ENCODE measurements at regions of chr19 and their contacts with region 1.

Region 1: GRCh38 chr19:2328401-2329148 is at the starts of genes LSM7 and SPPL2B:
- DNase-seq: peak; percentile 95
- H3K4me3 ChIP-seq: peak within 1 kb of the TSS; percentile 89
- H3K27ac ChIP-seq: peak within 1 kb of the TSS; percentile 70
- H3K4me1 ChIP-seq: peaks cover 65% of the 10 kb centered on the region
- CTCF ChIP-seq: no peak
- total RNA-seq, gene LSM7: 288 and 321 TPM in 2 replicates
- total RNA-seq, gene SPPL2B: 96.9 and 106 TPM in 2 replicates

Region 2: DNA sequence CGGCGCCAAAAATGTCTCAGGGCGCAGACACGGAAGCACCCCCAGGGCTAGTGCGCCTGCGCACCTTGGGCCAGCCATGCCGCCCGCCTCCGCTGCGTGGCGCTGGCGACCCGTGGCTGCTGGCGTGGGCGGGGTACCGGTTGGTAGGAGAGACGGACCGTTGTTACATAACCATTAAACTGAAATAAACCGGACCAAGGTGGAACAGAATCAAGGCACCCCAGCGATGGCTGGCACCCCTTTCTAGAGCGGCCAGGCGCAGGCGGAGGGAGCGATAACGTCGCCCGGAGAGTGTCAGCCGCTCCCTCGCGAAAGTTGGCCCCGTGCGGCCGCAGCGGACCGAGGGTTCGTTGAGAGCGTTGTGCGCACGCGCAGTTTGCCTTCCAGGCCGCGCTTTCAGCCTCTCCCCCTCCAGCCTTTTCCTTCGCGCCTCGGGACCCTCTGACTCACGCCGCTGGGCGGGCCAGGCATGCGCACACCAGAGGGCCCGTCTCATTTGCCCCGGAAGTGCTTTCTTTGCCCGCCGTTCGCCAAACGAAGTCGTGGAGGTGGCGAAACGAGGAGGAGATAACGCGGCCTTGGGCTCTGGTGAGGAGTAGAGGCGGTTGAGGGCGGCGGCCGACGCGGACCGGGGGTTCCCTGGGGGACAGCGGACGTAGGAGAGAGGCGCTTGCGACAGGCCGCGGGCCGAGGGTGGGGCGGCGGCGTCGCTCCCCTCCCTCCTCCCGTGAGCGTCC is 92.1 kb before region 1 on chr19 and contains the starts of genes PLEKHJ1 and SF3A2:
- CTCF ChIA-PET with region 1: no interaction called
- POLR2A ChIA-PET with region 1: no interaction called
- intact Hi-C with region 1: loop called (anchors 1 kb)
- DNase-seq: peak; percentile 99
- H3K4me3 ChIP-seq: peak within 1 kb of the TSS; percentile 96
- H3K27ac ChIP-seq: peak within 1 kb of the TSS; percentile 75
- H3K4me1 ChIP-seq: peaks cover 68% of the 10 kb centered on the region
- CTCF ChIP-seq: peak; percentile 97
- total RNA-seq, gene PLEKHJ1: 205 and 221 TPM in 2 replicates
- total RNA-seq, gene SF3A2: 104 and 124 TPM in 2 replicates

Region 3: DNA sequence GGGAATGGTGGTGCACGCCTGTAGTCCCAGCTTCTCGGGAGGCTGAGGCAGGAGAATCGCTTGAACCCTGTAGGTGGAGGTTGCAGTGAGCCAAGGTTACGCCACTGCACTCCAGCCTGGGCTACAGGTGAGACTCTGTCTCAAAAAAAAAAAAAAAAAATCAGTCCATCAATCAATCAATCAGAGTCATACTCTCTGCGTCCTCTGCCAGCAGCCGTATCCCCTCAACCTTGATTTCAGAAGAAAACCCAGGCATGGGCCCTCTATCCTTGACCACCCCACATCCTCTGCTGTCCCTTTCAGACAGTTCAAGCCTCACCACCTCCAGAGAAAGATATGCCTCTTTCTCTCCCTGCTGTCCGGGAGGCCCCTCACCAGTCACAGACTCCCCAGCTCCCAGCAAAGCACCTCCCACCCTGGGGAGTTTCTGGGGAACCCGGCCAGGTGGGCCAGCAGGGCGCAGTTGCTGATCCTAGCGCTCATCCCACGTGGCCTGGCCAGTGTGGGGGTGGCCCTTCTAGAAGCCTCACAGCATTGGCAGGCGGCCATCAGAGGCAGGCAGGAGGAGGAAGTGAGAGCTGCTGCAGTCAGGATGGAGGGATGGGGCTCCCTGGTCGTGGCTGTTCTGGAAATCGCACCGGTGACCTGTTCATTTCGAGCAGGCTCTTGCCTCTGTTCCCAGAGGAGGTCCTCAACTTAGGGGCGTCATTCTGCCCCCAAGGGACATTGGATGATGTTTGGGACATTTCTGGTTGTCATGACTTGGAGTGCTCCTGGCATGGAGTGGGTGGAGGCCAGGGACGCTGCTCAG is 62.2 kb before region 1 on chr19:
- CTCF ChIA-PET with region 1: no interaction called
- POLR2A ChIA-PET with region 1: no interaction called
- intact Hi-C with region 1: no loop called
- DNase-seq: peak; percentile 67
- H3K4me3 ChIP-seq: peak overlapping the region; percentile 1
- H3K27ac ChIP-seq: peak overlapping the region; percentile 26
- H3K4me1 ChIP-seq: peaks cover 40% of the 10 kb centered on the region
- CTCF ChIP-seq: no peak

Region 4: DNA sequence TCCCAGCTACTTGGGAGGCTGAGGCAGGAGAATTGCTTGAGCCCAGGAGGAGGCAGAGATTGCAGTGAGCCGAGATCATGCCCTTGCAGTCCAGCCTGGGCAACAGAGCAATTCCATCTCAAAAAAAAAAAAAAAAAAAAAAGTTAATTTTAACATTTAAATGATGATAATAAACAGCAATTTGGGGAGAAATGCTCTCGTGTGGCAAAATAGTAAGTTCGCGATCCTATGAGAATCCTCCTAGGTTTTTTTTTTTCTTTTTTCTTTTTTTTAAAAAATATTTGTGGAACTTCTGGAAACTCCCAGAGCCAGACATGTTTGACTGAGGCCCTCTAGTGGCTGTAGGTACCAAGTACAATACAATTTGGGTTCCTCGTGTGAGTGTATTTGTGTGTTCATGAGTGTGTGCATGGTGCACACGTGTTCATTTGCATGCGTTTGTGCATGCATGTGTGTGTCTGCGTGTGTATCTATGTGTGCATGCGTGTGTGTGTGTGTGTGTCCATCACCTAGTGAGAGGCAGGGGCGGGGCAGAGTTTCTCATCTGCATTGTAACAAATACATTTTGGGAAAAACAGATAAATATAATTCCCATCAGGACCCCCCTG is 62.6 kb after region 1 on chr19:
- CTCF ChIA-PET with region 1: no interaction called
- POLR2A ChIA-PET with region 1: interaction called, 3 read pairs
- intact Hi-C with region 1: loop called (anchors 2 kb)
- DNase-seq: peak; percentile 86
- H3K4me3 ChIP-seq: no peak overlapping the region
- H3K27ac ChIP-seq: no peak overlapping the region
- H3K4me1 ChIP-seq: peaks cover 22% of the 10 kb centered on the region
- CTCF ChIP-seq: peak; percentile 92

Region 5: DNA sequence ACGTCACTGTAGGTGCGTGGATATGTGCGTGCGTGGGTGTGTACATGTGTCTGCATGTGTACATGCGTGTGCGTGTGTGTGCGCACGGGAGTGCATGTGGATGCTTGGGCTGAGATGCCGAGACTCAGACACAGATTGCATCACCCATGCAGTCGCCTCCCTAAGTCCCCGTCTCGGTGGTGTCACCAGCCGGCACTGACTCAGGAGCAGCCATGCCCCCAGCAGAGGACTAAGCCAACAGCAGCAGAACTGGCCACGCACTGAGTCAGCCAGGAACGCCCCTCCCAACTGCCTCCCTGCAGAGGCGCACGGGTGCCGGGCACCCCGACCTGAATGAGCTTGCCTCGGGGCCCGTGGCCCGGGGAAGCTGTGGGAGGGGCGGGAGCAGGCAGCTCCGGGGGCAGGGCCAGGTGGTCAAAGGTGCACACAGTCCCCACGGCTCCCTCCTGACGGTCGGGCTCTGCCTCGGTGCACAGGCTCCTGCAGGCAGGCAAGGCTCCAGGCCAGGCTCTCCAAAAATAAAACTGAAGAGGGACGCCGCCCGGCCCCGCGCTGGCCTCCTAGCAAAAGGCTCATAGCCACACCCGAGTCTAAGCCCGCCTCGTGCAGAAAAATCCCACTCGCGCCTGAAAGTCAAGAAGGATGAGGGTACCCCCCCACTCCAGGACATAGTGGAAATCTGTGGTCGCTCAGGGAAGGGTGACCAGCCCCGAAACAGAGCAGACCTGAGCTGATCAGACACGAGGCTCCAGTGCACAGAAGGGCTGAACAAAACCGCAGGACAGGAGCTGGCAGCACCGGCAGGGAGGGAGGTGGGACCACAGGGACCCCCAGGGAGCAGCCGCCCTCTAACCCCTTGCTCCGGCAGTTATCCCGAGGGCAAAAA is 196.5 kb after region 1 on chr19:
- CTCF ChIA-PET with region 1: no interaction called
- POLR2A ChIA-PET with region 1: no interaction called
- intact Hi-C with region 1: no loop called
- DNase-seq: no peak
- H3K4me3 ChIP-seq: no peak overlapping the region
- H3K27ac ChIP-seq: no peak overlapping the region
- H3K4me1 ChIP-seq: no peaks in the 10 kb centered on the region
- CTCF ChIP-seq: no peak

Region 6: GRCh38 chr19:2627319-2627829 is 298.8 kb after region 1 on chr19:
- CTCF ChIA-PET with region 1: no interaction called
- POLR2A ChIA-PET with region 1: no interaction called
- intact Hi-C with region 1: loop called (anchors 5 kb)
- DNase-seq: peak; percentile 92
- H3K4me3 ChIP-seq: peak overlapping the region; percentile 30
- H3K27ac ChIP-seq: peak overlapping the region; percentile 93
- H3K4me1 ChIP-seq: peaks cover 79% of the 10 kb centered on the region
- CTCF ChIP-seq: no peak